CD4-positive, alpha-beta memory T cell (primary cell): ENCODE measurements at regions of chr9 and their contacts with region 1.

Region 1: DNA sequence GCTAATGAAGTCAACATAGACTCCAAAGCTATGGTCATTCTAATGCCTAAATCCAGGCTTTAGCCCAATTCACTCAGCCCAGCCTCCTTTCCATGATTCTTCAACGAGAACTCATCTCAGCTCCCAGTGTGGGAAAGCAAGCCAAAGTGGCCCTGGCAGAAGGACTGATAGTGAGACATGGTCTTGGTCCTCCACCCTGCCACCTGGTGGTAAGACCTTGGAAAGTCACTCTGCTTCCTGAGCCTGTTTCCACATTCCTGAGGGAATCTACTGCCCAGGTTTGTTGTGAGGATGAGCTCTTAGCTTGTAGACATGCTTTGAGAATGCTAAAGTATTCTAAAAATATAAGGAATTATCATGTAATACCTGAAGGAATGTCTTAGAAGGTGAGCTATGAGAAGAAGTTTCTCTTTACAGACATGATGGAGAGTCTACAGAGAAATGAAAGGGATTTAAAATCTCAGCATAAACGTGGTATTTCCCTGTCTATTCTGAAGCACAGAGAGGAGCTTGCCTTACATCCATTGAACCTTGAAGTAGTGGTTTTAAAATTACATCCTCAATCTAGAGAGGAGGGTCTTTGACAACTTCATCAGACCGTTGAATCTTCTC is 173.5 kb downstream of the TRIM32 start:
- DNase-seq: peak in 2 of 5 donors; percentile 1 to 2
- H3K4me3 ChIP-seq: no peak overlapping the region
- H3K4me3 Mint-ChIP-seq: no peak overlapping the region
- H3K27ac ChIP-seq: no peak overlapping the region
- H3K27ac Mint-ChIP-seq: no peak overlapping the region
- H3K4me1 ChIP-seq: no peaks in the 10 kb centered on the region
- H3K4me1 Mint-ChIP-seq: no peaks in the 10 kb centered on the region
- H3K27me3 ChIP-seq: no peaks in the 10 kb centered on the region
- H3K27me3 Mint-ChIP-seq: peaks cover 0 to 2% of the 10 kb centered on the region in 2 donors

Region 2: DNA sequence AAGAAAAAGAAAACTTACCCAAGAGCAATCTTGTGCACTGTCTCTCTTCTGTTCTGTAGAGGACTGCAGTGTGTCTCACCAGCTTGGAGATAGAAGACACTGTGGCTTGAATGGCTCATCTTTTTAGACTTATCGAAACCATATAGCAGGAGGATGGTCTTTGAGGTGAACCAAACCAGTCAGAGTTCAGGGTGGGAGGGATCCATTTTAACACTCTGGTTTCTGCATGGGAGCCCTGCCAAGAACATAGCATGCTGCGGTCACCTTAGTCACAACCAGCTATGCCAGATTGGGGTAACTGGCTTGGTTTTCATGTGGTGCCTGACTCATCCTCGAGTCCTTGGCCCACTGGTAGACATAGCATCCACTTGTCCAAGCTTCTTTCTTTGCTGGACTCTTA is 572.0 kb before region 1 on chr9:
- CTCF ChIA-PET with region 1: no interaction called
- POLR2A ChIA-PET with region 1: no interaction called
- intact Hi-C with region 1: no loop called
- DNase-seq: no peak
- H3K4me3 ChIP-seq: no peak overlapping the region
- H3K4me3 Mint-ChIP-seq: no peak overlapping the region
- H3K27ac ChIP-seq: no peak overlapping the region
- H3K27ac Mint-ChIP-seq: no peak overlapping the region
- H3K4me1 ChIP-seq: no peaks in the 10 kb centered on the region
- H3K4me1 Mint-ChIP-seq: no peaks in the 10 kb centered on the region
- H3K27me3 ChIP-seq: no peaks in the 10 kb centered on the region
- H3K27me3 Mint-ChIP-seq: peaks cover 5 to 6% of the 10 kb centered on the region in 2 donors

Region 3: GRCh38 chr9:116589392-116590354 is 270.9 kb before region 1 on chr9:
- CTCF ChIA-PET with region 1: interaction called, 4 read pairs
- POLR2A ChIA-PET with region 1: no interaction called
- intact Hi-C with region 1: loop called (anchors 10 kb)
- DNase-seq: no peak
- H3K4me3 ChIP-seq: no peak overlapping the region
- H3K4me3 Mint-ChIP-seq: no peak overlapping the region
- H3K27ac ChIP-seq: no peak overlapping the region
- H3K27ac Mint-ChIP-seq: no peak overlapping the region
- H3K4me1 ChIP-seq: no peaks in the 10 kb centered on the region
- H3K4me1 Mint-ChIP-seq: no peaks in the 10 kb centered on the region
- H3K27me3 ChIP-seq: no peaks in the 10 kb centered on the region
- H3K27me3 Mint-ChIP-seq: no peaks in the 10 kb centered on the region

Region 4: GRCh38 chr9:116737152-116737546 is 123.5 kb before region 1 on chr9:
- CTCF ChIA-PET with region 1: interaction called, 10 read pairs
- POLR2A ChIA-PET with region 1: no interaction called
- intact Hi-C with region 1: no loop called
- DNase-seq: peak in 4 of 5 donors; percentile 17 to 28 (median 22)
- H3K4me3 ChIP-seq: no peak overlapping the region
- H3K4me3 Mint-ChIP-seq: no peak overlapping the region
- H3K27ac ChIP-seq: no peak overlapping the region
- H3K27ac Mint-ChIP-seq: no peak overlapping the region
- H3K4me1 ChIP-seq: peaks cover 6% of the 10 kb centered on the region
- H3K4me1 Mint-ChIP-seq: peaks cover 0 to 7% (median 4%) of the 10 kb centered on the region in 4 donors
- H3K27me3 ChIP-seq: no peaks in the 10 kb centered on the region
- H3K27me3 Mint-ChIP-seq: peaks cover 2 to 9% of the 10 kb centered on the region in 2 donors

Region 5: GRCh38 chr9:117153021-117153420 is 292.4 kb after region 1 on chr9:
- CTCF ChIA-PET with region 1: no interaction called
- POLR2A ChIA-PET with region 1: no interaction called
- intact Hi-C with region 1: no loop called
- DNase-seq: no peak
- H3K4me3 ChIP-seq: no peak overlapping the region
- H3K4me3 Mint-ChIP-seq: no peak overlapping the region
- H3K27ac ChIP-seq: no peak overlapping the region
- H3K27ac Mint-ChIP-seq: no peak overlapping the region
- H3K4me1 ChIP-seq: no peaks in the 10 kb centered on the region
- H3K4me1 Mint-ChIP-seq: no peaks in the 10 kb centered on the region
- H3K27me3 ChIP-seq: no peaks in the 10 kb centered on the region
- H3K27me3 Mint-ChIP-seq: no peaks in the 10 kb centered on the region

Region 6: GRCh38 chr9:117169089-117169621 is 308.5 kb after region 1 on chr9:
- CTCF ChIA-PET with region 1: no interaction called
- POLR2A ChIA-PET with region 1: no interaction called
- intact Hi-C with region 1: no loop called
- DNase-seq: no peak
- H3K4me3 ChIP-seq: no peak overlapping the region
- H3K4me3 Mint-ChIP-seq: no peak overlapping the region
- H3K27ac ChIP-seq: no peak overlapping the region
- H3K27ac Mint-ChIP-seq: no peak overlapping the region
- H3K4me1 ChIP-seq: no peaks in the 10 kb centered on the region
- H3K4me1 Mint-ChIP-seq: no peaks in the 10 kb centered on the region
- H3K27me3 ChIP-seq: no peaks in the 10 kb centered on the region
- H3K27me3 Mint-ChIP-seq: peaks cover 0 to 2% of the 10 kb centered on the region in 2 donors